Naive thymus-derived CD4-positive, alpha-beta T cell (primary cell): ENCODE measurements at regions of chr21 and their contacts with region 1.

Region 1: DNA sequence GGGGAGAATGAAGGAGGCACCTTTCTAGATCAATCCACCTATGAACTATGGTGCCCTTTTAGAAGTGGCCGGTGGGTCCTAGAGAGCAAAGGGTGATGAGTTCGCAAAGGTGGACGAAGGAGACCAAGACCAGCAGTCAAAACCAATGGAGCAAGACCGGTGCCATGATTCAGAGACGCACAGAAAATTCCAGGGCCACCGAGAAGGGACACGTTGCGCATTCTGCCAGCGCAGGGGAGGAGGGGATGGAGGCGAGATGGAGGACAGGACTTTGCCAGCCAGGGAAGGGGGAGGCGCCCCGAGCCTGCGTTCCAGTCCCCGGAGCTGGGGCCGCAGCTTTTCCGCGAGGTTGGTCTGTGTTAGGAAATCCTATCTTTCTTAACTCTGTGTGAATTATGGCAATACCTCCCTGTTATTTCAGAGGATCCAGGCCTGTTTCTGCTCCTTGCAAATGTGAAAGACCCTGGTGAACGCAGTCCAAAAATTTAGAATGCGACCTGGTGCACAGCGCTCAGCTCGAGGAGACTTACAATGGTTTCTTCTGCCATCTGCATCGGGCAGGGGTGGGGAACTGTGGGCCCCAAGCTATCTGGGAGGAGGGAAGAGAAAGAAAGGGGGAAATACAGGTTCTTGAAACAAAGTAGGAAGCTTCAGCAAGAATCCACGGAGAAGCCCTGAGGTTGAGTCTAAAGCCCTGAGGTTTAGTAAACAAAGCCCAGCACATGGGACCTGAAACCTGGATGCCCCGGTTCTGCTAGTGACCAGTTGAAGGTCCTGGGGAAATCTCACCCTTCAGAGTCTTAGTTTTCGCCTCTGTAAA is 129.4 kb downstream of the MRPS6 start:
- DNase-seq: no peak
- ATAC-seq: no peak
- H3K4me3 ChIP-seq: peak overlapping the region; percentile 47
- H3K4me3 Mint-ChIP-seq: peak overlapping the region; percentile 70 to 92 (median 86)
- H3K27ac ChIP-seq: no peak overlapping the region
- H3K27ac Mint-ChIP-seq: peak overlapping the region in 8 of 9 donors; percentile 24 to 87 (median 63)
- H3K4me1 ChIP-seq: peaks cover 8 to 31% of the 10 kb centered on the region in 2 donors
- H3K4me1 Mint-ChIP-seq: peaks cover 28 to 64% (median 56%) of the 10 kb centered on the region in 7 donors
- H3K27me3 ChIP-seq: no peaks in the 10 kb centered on the region
- H3K27me3 Mint-ChIP-seq: no peaks in the 10 kb centered on the region

Region 2: GRCh38 chr21:34154878-34155277 is 47.9 kb before region 1 on chr21:
- CTCF ChIA-PET with region 1: no interaction called
- POLR2A ChIA-PET with region 1: no interaction called
- intact Hi-C with region 1: loop called in 1 of 2 experiments (anchors 2 kb)
- DNase-seq: peak in 6 of 9 donors; percentile 18 to 59 (median 32)
- ATAC-seq: peak; percentile 32
- H3K4me3 ChIP-seq: no peak overlapping the region
- H3K4me3 Mint-ChIP-seq: peak overlapping the region in 1 of 10 donors; percentile 43
- H3K27ac ChIP-seq: no peak overlapping the region
- H3K27ac Mint-ChIP-seq: peak overlapping the region in 5 of 9 donors; percentile 46 to 91 (median 81)
- H3K4me1 ChIP-seq: no peaks in the 10 kb centered on the region
- H3K4me1 Mint-ChIP-seq: peaks cover 10 to 49% (median 15%) of the 10 kb centered on the region in 7 donors
- H3K27me3 ChIP-seq: no peaks in the 10 kb centered on the region
- H3K27me3 Mint-ChIP-seq: no peaks in the 10 kb centered on the region

Region 3: GRCh38 chr21:34510148-34511142 is 307.7 kb after region 1 on chr21:
- CTCF ChIA-PET with region 1: no interaction called
- POLR2A ChIA-PET with region 1: no interaction called
- intact Hi-C with region 1: no loop called
- DNase-seq: peak in 3 of 9 donors; percentile 4 to 64 (median 26)
- ATAC-seq: peak; percentile 72
- H3K4me3 ChIP-seq: no peak overlapping the region
- H3K4me3 Mint-ChIP-seq: no peak overlapping the region
- H3K27ac ChIP-seq: no peak overlapping the region
- H3K27ac Mint-ChIP-seq: peak overlapping the region in 1 of 9 donors; percentile 6
- H3K4me1 ChIP-seq: no peaks in the 10 kb centered on the region
- H3K4me1 Mint-ChIP-seq: peaks cover 0 to 8% (median 0%) of the 10 kb centered on the region in 7 donors
- H3K27me3 ChIP-seq: no peaks in the 10 kb centered on the region
- H3K27me3 Mint-ChIP-seq: peaks cover 0 to 6% (median 5%) of the 10 kb centered on the region in 5 donors